ENCODE measurements at regions of chr6 and their contacts with region 1.

Region 1: GRCh38 chr6:79570129-79571029 is 33.1 kb upstream of the LCA5 start:
- DNase-seq: peak; percentile 7 to 38
- ATAC-seq: peak; percentile 62 to 73; a peak in 4 of 6 replicates
- H3K4me3 ChIP-seq: peak overlapping the region; percentile 32; the same call in 1 of the 3 replicates
- H3K27ac ChIP-seq: no peak overlapping the region
- H3K4me1 ChIP-seq: peaks cover 16% of the 10 kb centered on the region
- CTCF ChIP-seq: peak; percentile 79
- EP300 ChIP-seq: no peak
- POLR2A ChIP-seq: no peak
- RAD21 ChIP-seq: peak; percentile 80

Region 2: GRCh38 chr6:79586548-79586947 is 16.2 kb after region 1 on chr6:
- CTCF ChIA-PET with region 1: no interaction called
- POLR2A ChIA-PET with region 1: no interaction called
- DNase-seq: peak; percentile 15 to 54
- ATAC-seq: peak; percentile 85 to 95; a peak in 5 of 6 replicates
- H3K4me3 ChIP-seq: no peak overlapping the region
- H3K27ac ChIP-seq: no peak overlapping the region
- H3K4me1 ChIP-seq: no peaks in the 10 kb centered on the region
- CTCF ChIP-seq: no peak
- EP300 ChIP-seq: no peak
- POLR2A ChIP-seq: no peak
- RAD21 ChIP-seq: no peak

Region 3: DNA sequence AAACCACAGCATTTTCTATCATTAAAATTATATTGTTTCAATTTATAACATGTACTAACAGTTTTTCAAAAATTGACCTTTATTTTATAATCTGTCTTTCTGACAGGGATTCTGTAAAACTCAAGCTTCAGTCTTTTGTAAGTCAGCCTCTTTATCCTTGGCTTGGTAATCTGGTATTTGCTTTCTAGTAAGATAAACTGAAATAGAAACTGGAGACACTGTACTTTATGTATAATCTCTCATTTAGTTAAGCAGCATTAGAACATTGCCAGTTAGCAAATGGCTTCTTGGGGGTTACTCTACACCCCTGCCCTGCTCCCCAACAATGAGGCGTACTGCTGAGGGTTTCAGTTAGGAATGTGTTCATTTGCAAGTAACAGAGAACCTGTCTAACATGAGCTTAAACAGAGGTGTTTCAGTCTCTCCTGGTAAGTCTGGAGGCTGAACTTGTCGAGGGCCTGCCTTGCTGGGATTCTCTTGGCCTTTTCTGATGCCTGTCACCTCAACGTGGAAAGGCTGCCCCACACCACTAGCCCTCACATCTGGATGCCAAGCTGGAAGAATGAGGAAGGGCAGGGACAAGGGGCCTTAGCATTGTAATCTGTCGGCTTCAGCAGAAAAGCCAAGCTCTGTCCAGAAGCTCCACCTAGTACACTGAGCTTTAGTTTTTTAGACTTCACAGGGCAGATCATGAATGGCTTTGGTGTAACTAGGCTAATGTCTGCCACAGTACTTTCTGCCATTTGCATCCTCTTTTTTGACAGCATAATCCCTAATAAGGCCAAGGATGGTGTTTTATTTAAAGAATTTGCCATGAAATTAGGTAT is 95.6 kb after region 1 on chr6:
- CTCF ChIA-PET with region 1: interaction called, 10 read pairs
- POLR2A ChIA-PET with region 1: no interaction called
- DNase-seq: no peak
- ATAC-seq: no peak
- H3K4me3 ChIP-seq: no peak overlapping the region
- H3K27ac ChIP-seq: no peak overlapping the region
- H3K4me1 ChIP-seq: no peaks in the 10 kb centered on the region
- CTCF ChIP-seq: no peak
- EP300 ChIP-seq: no peak
- POLR2A ChIP-seq: no peak
- RAD21 ChIP-seq: no peak

Region 4: DNA sequence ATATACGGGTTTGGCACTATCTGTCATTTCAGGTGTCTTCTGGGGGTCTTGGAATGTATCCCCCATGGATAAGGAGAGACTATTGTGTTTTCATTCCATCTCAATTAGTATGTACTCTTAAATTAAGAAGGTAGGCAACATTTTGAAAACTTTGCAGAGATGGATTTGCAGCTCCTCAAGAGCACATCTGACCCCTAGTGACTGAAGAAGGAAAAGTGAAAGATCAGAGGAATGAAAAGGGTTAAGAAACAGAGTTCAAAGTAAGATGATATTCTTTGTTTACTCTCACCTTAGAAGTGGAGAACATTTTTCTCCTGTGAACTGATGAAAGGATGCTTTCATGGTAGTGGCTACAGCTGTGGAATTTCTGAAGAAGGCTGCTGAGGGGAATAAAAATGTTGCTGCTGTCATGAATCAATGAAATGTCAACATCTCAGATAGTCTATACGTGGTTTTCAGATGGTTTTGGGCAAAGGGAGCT is 102.3 kb after region 1 on chr6:
- CTCF ChIA-PET with region 1: interaction called, 14 read pairs
- POLR2A ChIA-PET with region 1: no interaction called
- DNase-seq: peak; percentile 2 to 37
- ATAC-seq: peak in 1 of 2 experiments; percentile 59; a peak in 1 of 6 replicates
- H3K4me3 ChIP-seq: no peak overlapping the region
- H3K27ac ChIP-seq: no peak overlapping the region
- H3K4me1 ChIP-seq: peaks cover 12% of the 10 kb centered on the region; the same call in 2 of the 3 replicates
- CTCF ChIP-seq: peak; percentile 61
- EP300 ChIP-seq: no peak
- POLR2A ChIP-seq: no peak
- RAD21 ChIP-seq: peak; percentile 71 to 75

Region 5: DNA sequence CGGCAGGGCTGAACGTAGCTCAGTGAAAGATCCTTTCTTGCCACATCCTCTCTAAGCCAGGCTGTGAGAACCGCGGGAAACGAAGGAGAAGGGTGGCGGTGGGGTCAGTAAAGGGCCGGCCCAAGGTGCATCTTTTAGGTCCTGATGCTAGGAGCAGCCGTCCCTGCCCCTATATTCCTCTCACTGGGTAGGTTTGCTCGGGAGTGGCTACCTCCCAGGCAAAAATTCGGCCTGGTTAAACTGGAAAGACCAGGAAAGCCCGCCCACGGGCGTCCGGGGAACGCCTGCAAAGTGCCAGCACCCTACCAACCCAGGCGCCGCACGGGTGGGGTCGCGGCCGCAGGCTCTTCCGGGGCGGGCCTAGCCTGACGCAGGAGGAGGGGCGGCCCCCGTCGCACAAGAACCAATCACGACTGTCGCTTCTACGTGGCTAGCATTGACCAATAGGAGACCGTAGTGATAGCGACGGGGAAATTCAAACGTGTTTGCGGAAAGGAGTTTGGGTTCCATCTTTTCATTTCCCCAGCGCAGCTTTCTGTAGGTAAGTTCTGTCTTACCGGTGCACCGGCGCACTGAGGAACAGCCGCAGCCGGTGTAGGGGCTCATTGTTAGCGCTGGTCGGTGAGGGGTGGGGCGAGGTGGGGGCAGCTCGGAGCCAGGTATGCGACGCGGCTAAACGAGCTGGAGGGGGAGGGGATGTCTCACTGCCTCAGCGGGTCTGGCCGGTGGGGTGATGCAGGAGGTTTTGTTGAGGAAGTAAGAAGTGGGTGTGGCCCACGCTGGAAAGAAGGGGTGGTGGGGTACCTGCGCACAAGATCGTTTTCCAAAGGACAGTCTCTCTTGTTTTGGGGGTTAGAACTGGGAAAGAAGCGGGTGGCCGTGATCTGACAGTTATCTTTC is 434.0 kb after region 1 on chr6 and contains the start of gene TTK:
- CTCF ChIA-PET with region 1: no interaction called
- POLR2A ChIA-PET with region 1: no interaction called
- DNase-seq: peak; percentile 64 to 94
- ATAC-seq: peak; percentile 100
- H3K4me3 ChIP-seq: peak within 1 kb of the TSS; percentile 79
- H3K27ac ChIP-seq: peak within 1 kb of the TSS; percentile 86 to 87
- H3K4me1 ChIP-seq: peaks cover 14% of the 10 kb centered on the region; the same call in 2 of the 3 replicates
- CTCF ChIP-seq: no peak
- EP300 ChIP-seq: no peak
- POLR2A ChIP-seq: no peak; the same call in 1 of the 2 replicates
- RAD21 ChIP-seq: no peak
- polyA plus RNA-seq, gene TTK: 18.9 and 30.6 TPM in 2 replicates

Measured in A549 (cell line).